Activated naive CD4-positive, alpha-beta T cell treated with anti-CD3 and anti-CD28 coated beads for 36 hours (primary cell): ENCODE measurements at regions of chr2 and their contacts with region 1.

Region 1: GRCh38 chr2:178450774-178451525 is at the starts of genes PJVK and PRKRA:
- DNase-seq: peak; percentile 96
- H3K4me3 Mint-ChIP-seq: peak within 1 kb of the TSS; percentile 91
- H3K27ac Mint-ChIP-seq: peak within 1 kb of the TSS; percentile 97
- H3K4me1 Mint-ChIP-seq: peaks cover 27% of the 10 kb centered on the region
- H3K27me3 Mint-ChIP-seq: no peaks in the 10 kb centered on the region
- total RNA-seq, gene PJVK: 2.0 to 2.4 TPM
- total RNA-seq, gene PRKRA: 78.2 to 82.9 TPM

Region 2: GRCh38 chr2:177212106-177212890 is 1238.7 kb before region 1 on chr2 and contains the start of gene HNRNPA3:
- CTCF ChIA-PET with region 1: no interaction called
- intact Hi-C with region 1: loop called (anchors 2 kb)
- DNase-seq: peak; percentile 99
- H3K4me3 Mint-ChIP-seq: peak within 1 kb of the TSS; percentile 97
- H3K27ac Mint-ChIP-seq: peak within 1 kb of the TSS; percentile 100
- H3K4me1 Mint-ChIP-seq: peaks cover 43% of the 10 kb centered on the region
- H3K27me3 Mint-ChIP-seq: no peaks in the 10 kb centered on the region
- total RNA-seq, gene HNRNPA3: 312 to 340 TPM

Region 3: DNA sequence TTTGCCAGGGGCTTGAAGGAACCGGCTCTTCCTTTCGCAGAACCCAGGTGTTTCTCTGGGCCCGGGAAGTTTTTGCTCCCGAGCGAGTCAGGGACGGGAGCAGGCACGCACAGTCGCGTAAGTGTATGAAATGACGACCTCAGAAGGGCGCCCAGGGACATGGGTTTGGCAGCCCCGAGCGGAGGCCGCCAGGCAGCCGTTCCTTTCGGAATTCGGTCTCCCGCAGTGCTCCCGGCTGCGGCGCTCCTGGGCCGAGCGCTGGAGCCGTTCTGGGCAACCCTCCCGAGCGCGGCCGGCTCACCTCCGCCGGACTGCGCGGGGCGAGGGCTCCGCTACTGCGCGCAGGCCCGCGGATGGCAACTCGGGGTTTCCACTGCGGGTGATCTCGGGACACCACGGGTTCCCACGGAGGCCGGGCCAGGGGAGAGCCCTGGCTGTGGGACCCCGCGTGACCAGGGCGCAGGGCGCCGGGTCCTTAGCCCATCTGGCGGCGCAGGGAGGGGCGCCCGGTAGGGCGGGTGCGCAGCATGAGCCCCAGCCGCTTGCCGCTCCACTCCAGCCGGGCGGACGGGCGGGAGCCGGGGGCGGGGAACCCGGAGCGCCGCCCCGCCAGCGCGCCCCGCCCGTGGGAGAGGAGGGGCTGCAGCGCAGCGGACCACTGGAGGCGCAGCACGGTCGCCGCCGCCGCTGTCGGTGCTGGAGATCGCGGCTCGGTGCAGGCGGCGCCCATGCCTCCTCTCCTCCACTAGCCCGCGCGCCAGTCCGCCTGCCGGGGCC is 256.9 kb before region 1 on chr2 and contains the start of gene OSBPL6:
- CTCF ChIA-PET with region 1: no interaction called
- intact Hi-C with region 1: loop called (anchors 10 kb)
- DNase-seq: peak; percentile 65
- H3K4me3 Mint-ChIP-seq: peak within 1 kb of the TSS; percentile 69
- H3K27ac Mint-ChIP-seq: no peak within 1 kb of the TSS
- H3K4me1 Mint-ChIP-seq: peaks cover 3% of the 10 kb centered on the region
- H3K27me3 Mint-ChIP-seq: peaks cover 51% of the 10 kb centered on the region
- total RNA-seq, gene OSBPL6: 1.9 to 2.3 TPM

Region 4: DNA sequence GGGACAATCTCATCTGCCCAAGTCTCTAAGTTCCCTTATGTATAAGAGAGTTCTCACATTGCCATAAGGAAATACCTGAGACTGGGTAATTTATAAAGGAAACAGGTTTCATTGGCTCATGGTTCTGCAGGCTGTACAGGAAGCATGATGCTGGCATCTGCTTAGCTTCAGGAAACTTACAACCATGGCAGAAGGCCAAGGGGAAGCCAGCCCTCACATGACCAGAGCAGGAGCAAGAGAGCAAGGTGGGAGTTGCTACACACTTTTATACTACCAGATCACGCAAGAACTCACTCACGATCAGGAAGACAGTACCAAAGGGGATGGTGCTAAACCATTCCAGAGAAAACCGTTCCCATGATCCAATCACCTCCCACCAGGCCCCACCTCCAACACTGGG is 73.9 kb before region 1 on chr2:
- CTCF ChIA-PET with region 1: no interaction called
- intact Hi-C with region 1: no loop called
- DNase-seq: no peak
- H3K4me3 Mint-ChIP-seq: no peak overlapping the region
- H3K27ac Mint-ChIP-seq: no peak overlapping the region
- H3K4me1 Mint-ChIP-seq: no peaks in the 10 kb centered on the region
- H3K27me3 Mint-ChIP-seq: peaks cover 14% of the 10 kb centered on the region

Region 5: GRCh38 chr2:178426388-178426787 is 24.6 kb before region 1 on chr2:
- CTCF ChIA-PET with region 1: no interaction called
- intact Hi-C with region 1: loop called (anchors 2 kb)
- DNase-seq: no peak
- H3K4me3 Mint-ChIP-seq: no peak overlapping the region
- H3K27ac Mint-ChIP-seq: no peak overlapping the region
- H3K4me1 Mint-ChIP-seq: no peaks in the 10 kb centered on the region
- H3K27me3 Mint-ChIP-seq: no peaks in the 10 kb centered on the region

Region 6: DNA sequence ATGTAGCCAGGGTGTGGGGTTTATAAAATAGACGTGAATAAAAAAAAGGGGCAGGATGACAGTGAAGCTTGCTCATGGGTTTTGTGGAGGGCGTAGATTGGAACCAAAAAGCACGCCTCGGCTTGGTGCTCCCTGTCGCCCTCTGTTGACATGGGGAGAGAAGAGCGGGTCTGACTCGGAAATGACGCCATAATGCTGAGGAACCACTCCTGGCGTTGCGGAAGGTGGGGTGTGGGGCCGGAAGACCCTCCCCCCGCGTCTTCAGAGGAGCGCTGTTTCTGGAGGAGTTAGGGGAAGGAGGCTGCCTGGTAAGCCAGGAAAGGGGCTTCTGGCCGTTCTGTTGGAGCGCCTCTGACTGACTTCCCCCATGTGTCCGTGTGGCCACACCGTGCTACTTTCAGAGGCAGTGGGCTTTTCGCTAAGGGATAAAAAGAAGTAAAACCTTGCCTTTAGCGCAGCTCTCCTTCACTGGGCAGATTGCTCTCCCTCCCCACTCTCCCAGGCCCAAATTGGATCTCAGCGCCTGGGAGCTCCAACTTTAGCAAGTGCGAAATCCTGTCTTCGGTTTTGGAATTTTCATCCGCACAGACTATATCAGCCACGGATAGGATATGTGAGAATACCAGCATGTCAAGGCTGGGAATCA is 72.1 kb after region 1 on chr2:
- CTCF ChIA-PET with region 1: interaction called, 3 read pairs
- intact Hi-C with region 1: loop called (anchors 1 kb)
- DNase-seq: peak; percentile 92
- H3K4me3 Mint-ChIP-seq: peak overlapping the region; percentile 82
- H3K27ac Mint-ChIP-seq: peak overlapping the region; percentile 87
- H3K4me1 Mint-ChIP-seq: peaks cover 48% of the 10 kb centered on the region
- H3K27me3 Mint-ChIP-seq: no peaks in the 10 kb centered on the region

Region 7: GRCh38 chr2:180006781-180007579 is 1556.0 kb after region 1 on chr2 and contains the start of gene CWC22:
- CTCF ChIA-PET with region 1: no interaction called
- intact Hi-C with region 1: loop called (anchors 2 kb)
- DNase-seq: peak; percentile 93
- H3K4me3 Mint-ChIP-seq: peak within 1 kb of the TSS; percentile 92
- H3K27ac Mint-ChIP-seq: peak within 1 kb of the TSS; percentile 100
- H3K4me1 Mint-ChIP-seq: peaks cover 36% of the 10 kb centered on the region
- H3K27me3 Mint-ChIP-seq: no peaks in the 10 kb centered on the region
- total RNA-seq, gene CWC22: 20.4 TPM